ENCODE measurements at regions of chr6 and their contacts with region 1.

Region 1: DNA sequence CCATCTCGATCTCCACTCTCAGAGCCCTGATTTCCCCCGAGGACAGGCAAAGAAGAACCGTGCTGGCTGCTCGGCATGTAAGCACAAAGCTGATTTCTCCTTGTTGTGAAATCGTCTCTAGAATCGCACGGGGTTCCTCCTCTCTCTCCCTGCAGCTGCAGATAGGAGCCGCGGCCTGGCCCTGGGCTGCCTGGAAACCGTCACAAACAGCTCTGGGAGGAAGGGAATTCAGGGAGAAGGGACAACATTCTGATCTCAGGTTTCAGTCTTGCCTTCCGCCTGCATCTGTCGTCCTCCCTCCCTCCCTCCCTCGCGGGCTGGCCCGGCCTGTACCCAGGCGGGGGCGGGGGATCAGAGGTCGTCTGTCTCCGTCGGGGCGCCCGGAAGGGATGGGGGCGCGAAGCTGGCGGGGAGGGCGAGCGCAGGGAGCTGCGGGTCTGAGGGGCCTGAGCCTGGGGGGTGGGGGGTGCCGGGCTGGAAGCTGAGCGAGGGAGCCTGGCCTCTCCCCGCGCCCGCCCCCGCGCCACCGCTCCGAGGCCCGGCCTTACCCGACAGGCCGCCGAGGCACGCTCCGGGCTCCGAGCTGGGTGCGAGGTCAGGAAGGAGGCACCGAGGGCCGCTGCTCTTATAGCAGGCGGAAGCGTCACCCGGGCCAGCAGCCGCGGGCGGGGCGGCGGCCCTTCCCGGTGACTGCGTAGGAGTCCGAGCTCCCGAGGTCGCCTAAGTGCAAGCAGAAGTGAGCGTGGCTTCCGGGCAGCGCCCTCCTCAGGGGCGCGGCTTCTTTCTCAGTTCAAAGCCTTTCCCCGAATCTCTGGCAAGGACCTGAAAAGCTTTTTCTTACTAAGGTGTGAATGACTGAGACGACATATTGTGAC is at the start of gene SERPINB1:
- DNase-seq: peak; percentile 97
- ATAC-seq: peak; percentile 88
- H3K4me3 ChIP-seq: peak within 1 kb of the TSS; percentile 66 to 86 (median 75)
- H3K27ac ChIP-seq: peak within 1 kb of the TSS; percentile 97
- H3K4me1 ChIP-seq: peaks cover 71% of the 10 kb centered on the region
- H3K27me3 ChIP-seq: no peaks in the 10 kb centered on the region
- CTCF ChIP-seq: peak; percentile 64
- EP300 ChIP-seq: peak; percentile 70 to 77
- POLR2A ChIP-seq: peak; percentile 64 to 83
- RAD21 ChIP-seq: peak; percentile 49
- total RNA-seq, gene SERPINB1: 41.4 and 60.1 TPM in 2 replicates

Region 2: GRCh38 chr6:2799936-2800527 is 41.5 kb before region 1 on chr6:
- CTCF ChIA-PET with region 1: no interaction called
- POLR2A ChIA-PET with region 1: interaction called, 8 read pairs
- in situ Hi-C with region 1: loop called (anchors 5 kb)
- intact Hi-C with region 1: no loop called
- DNase-seq: no peak
- ATAC-seq: no peak
- H3K4me3 ChIP-seq: no peak overlapping the region
- H3K27ac ChIP-seq: no peak overlapping the region
- H3K4me1 ChIP-seq: peaks cover 22% of the 10 kb centered on the region
- H3K27me3 ChIP-seq: no peaks in the 10 kb centered on the region
- CTCF ChIP-seq: no peak
- EP300 ChIP-seq: no peak
- POLR2A ChIP-seq: no peak
- RAD21 ChIP-seq: no peak

Region 3: DNA sequence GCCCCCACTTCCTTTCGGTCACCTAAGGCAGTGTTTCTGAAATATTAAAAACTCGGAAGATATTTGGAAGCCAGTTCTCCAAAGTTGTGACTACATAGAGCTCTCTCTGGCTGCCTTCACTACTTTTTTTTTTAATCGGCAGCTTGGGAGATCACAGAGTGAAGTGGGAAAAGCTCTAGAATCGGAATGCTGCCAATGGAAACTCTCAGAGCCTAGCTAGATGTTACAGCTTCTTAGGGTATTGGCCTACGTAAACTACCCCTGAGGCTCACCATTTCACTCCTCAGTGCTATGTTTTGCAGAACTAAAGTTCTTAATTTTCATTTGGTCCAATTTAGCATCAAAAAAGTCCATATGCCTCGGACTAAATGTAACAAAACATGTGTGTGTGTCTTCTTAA is 14.4 kb before region 1 on chr6:
- CTCF ChIA-PET with region 1: no interaction called
- POLR2A ChIA-PET with region 1: interaction called, 12 read pairs
- in situ Hi-C with region 1: no loop called
- intact Hi-C with region 1: no loop called
- DNase-seq: no peak
- ATAC-seq: no peak
- H3K4me3 ChIP-seq: no peak overlapping the region
- H3K27ac ChIP-seq: no peak overlapping the region
- H3K4me1 ChIP-seq: peaks cover 15% of the 10 kb centered on the region
- H3K27me3 ChIP-seq: no peaks in the 10 kb centered on the region
- CTCF ChIP-seq: no peak
- EP300 ChIP-seq: no peak
- POLR2A ChIP-seq: no peak
- RAD21 ChIP-seq: no peak

Region 4: GRCh38 chr6:2900821-2901644 is 59.5 kb after region 1 on chr6:
- CTCF ChIA-PET with region 1: no interaction called
- POLR2A ChIA-PET with region 1: interaction called, 45 read pairs
- in situ Hi-C with region 1: no loop called
- intact Hi-C with region 1: no loop called
- DNase-seq: no peak
- ATAC-seq: no peak
- H3K4me3 ChIP-seq: peak overlapping the region in 1 of 3 experiments; percentile 89; a peak in 1 of 6 replicates
- H3K27ac ChIP-seq: no peak overlapping the region
- H3K4me1 ChIP-seq: peaks cover 28% of the 10 kb centered on the region
- H3K27me3 ChIP-seq: peaks cover 0 to 8% of the 10 kb centered on the region in 2 experiments; a peak in 1 of 5 replicates
- CTCF ChIP-seq: no peak
- EP300 ChIP-seq: no peak
- POLR2A ChIP-seq: no peak
- RAD21 ChIP-seq: no peak

Region 5: DNA sequence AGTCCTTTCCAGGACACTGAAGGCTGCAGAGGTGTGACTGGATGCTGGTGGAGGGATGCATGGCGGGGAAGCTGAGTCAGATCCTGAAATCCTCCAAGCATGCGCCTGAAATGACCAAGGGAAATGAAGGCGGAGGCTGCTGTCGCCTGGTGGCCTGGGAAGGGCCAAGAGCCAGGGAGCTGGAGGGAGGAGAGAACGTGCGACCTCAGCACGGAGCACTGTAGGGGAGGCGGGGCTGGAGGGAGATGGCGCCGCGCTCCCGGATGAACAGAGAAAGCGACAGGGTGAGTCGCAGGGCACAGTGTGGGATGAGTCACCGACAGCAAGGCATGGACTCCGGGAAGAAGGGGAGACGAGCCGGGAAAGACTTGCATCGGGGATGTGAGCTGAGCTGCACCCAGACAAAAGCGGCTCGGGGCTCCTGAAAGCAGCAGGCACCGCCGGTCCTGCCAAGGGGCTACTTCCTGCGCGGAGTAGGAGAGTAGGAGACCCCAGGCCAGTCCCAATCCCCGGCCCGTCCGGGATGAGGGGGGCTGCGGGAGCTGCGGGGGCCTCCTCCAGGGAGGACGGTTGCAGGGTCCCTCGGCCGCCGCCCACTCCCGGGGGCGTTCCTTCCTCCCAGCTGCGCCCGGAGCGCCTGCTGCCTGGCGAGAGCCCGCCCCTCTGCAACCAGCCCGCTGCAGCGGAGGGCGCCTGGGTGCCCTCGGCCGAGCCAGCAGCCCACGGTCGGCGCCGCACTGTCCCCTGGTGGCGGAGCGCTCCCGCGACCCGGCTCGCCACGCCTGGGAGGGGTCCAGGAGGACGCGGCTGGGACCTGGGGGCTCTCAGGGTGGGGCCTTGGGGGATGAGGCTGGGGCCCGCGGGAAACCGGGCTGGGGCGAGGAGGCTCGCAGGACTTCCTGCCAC is 147.2 kb after region 1 on chr6:
- CTCF ChIA-PET with region 1: interaction called, 3 read pairs
- POLR2A ChIA-PET with region 1: interaction called, 61 read pairs
- in situ Hi-C with region 1: no loop called
- intact Hi-C with region 1: loop called (anchors 2 kb)
- DNase-seq: peak; percentile 86
- ATAC-seq: peak; percentile 89
- H3K4me3 ChIP-seq: peak overlapping the region; percentile 72 to 81 (median 78)
- H3K27ac ChIP-seq: peak overlapping the region; percentile 96
- H3K4me1 ChIP-seq: peaks cover 61% of the 10 kb centered on the region
- H3K27me3 ChIP-seq: no peaks in the 10 kb centered on the region; a peak in 1 of 5 replicates
- CTCF ChIP-seq: peak; percentile 93
- EP300 ChIP-seq: peak in 1 of 2 experiments; percentile 10; a peak in 2 of 4 replicates
- POLR2A ChIP-seq: peak; percentile 72 to 80
- RAD21 ChIP-seq: peak; percentile 99

Region 6: GRCh38 chr6:3052481-3053230 is 211.2 kb after region 1 on chr6:
- CTCF ChIA-PET with region 1: no interaction called
- POLR2A ChIA-PET with region 1: interaction called, 12 read pairs
- in situ Hi-C with region 1: no loop called
- intact Hi-C with region 1: loop called (anchors 5 kb)
- DNase-seq: no peak
- ATAC-seq: peak; percentile 35
- H3K4me3 ChIP-seq: peak overlapping the region; percentile 57 to 80 (median 72)
- H3K27ac ChIP-seq: peak overlapping the region; percentile 85
- H3K4me1 ChIP-seq: peaks cover 46% of the 10 kb centered on the region
- H3K27me3 ChIP-seq: peaks cover 0 to 30% of the 10 kb centered on the region in 2 experiments; a peak in 2 of 5 replicates
- CTCF ChIP-seq: no peak; the same call in 1 of the 2 replicates
- EP300 ChIP-seq: 0 out of 4 replicates have a peak, but pooled peaks of 1 of the 2 experiments have one; percentile 19
- POLR2A ChIP-seq: no peak
- RAD21 ChIP-seq: no peak